Activated CD8-positive, alpha-beta memory T cell treated with anti-CD3 and anti-CD28 coated beads, Interleukin-2, amount 10 ng/mL, durations not matched to agents 7 days and 5 days (primary cell): ENCODE measurements at regions of chr19 and their contacts with region 1.

Region 1: GRCh38 chr19:58558623-58559274 is 338 bp upstream of the UBE2M start:
- DNase-seq: peak; percentile 100
- ATAC-seq: peak; percentile 69
- H3K4me3 Mint-ChIP-seq: peak overlapping the region; percentile 95
- H3K27ac Mint-ChIP-seq: peak overlapping the region; percentile 100
- H3K4me1 Mint-ChIP-seq: peaks cover 80% of the 10 kb centered on the region
- H3K27me3 Mint-ChIP-seq: no peaks in the 10 kb centered on the region

Region 2: GRCh38 chr19:58543826-58544590 is 14.7 kb before region 1 on chr19 and contains the start of gene TRIM28:
- CTCF ChIA-PET with region 1: interaction called, 12 read pairs
- DNase-seq: peak; percentile 100
- ATAC-seq: peak; percentile 93
- H3K4me3 Mint-ChIP-seq: peak within 1 kb of the TSS; percentile 96
- H3K27ac Mint-ChIP-seq: peak within 1 kb of the TSS; percentile 94
- H3K4me1 Mint-ChIP-seq: peaks cover 33% of the 10 kb centered on the region
- H3K27me3 Mint-ChIP-seq: peaks cover 9% of the 10 kb centered on the region
- total RNA-seq, gene TRIM28: 488 to 571 TPM

Region 3: DNA sequence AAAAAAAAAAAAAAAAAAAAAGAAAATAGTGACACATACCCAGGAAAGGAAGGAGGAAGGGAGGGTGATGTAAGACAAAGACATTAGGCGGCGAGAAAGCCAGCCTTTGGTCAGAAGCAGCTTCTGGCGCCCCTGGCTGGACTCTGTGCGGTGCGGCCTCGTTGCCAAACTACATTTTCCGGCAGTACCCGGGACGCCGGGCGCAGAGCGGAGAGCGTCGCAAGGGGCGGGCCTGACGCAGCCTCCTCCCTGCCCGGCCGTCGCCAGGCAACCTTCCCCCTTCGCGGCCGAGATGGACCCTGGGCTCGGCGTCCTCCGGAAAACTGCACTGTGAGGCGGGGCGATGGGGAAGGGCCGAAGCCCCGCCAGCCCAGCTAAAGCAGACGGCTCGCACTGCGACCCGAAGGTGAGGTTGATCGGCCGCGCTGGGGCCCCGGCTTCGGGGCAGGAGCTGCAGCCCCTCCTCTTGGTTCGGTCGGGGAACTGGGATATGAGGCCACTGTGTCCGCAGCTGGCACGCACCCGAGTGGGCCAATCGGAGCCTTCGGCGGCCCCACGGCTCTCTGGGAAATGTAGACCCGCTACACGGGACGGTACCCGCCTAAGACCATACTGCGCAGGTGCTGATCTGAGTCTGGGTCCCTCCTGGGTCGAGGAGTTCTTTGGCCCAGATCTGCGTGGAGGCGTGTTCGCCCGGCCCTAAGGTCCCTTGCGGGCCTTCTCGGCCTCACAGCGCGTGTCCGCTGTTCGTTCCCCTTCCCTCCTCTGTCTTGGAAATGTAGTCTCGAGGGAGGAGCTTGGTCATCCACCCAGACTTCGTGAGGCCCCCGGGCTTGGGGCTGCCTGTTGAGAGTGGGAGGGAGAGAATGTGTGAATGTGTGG is 16.7 kb after region 1 on chr19:
- CTCF ChIA-PET with region 1: interaction called, 10 read pairs
- DNase-seq: peak; percentile 91
- ATAC-seq: peak; percentile 46
- H3K4me3 Mint-ChIP-seq: peak overlapping the region; percentile 82
- H3K27ac Mint-ChIP-seq: peak overlapping the region; percentile 84
- H3K4me1 Mint-ChIP-seq: peaks cover 37% of the 10 kb centered on the region
- H3K27me3 Mint-ChIP-seq: no peaks in the 10 kb centered on the region